Endothelial cell of umbilical vein (primary cell): ENCODE measurements at regions of chr2 and their contacts with region 1.

Region 1: GRCh38 chr2:44087036-44087713 is 81.5 kb upstream of the PPM1B start:
- DNase-seq: peak; percentile 85
- H3K4me3 ChIP-seq: peak overlapping the region in 2 of 3 experiments; percentile 15 to 45
- H3K27ac ChIP-seq: no peak overlapping the region
- H3K4me1 ChIP-seq: peaks cover 4% of the 10 kb centered on the region
- H3K27me3 ChIP-seq: peaks cover 19 to 27% of the 10 kb centered on the region in 2 experiments
- CTCF ChIP-seq: peak; percentile 92 to 95
- POLR2A ChIP-seq: no peak

Region 2: DNA sequence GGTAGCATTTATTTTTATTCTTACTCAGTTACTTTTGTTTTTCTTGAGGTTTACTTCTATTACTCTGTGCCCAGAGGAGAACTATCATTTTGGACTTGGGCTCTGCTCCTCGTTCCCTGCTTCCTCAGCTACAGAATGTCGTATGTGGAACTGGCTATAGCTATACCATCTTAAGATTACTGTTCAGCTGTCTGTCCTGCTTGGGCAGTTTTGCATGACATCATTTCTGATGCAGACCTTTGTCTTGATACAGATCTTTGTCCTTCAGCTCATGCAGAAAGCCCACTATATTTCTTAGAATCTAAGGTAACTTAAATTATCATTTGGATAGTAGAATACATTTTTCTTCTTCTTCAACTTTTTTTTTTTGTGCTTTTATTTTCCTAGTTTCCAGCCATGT is 397.2 kb before region 1 on chr2:
- CTCF ChIA-PET with region 1: no interaction called
- POLR2A ChIA-PET with region 1: no interaction called
- dilution Hi-C with region 1: no loop called
- intact Hi-C with region 1: no loop called
- DNase-seq: no peak
- H3K4me3 ChIP-seq: no peak overlapping the region
- H3K27ac ChIP-seq: no peak overlapping the region
- H3K4me1 ChIP-seq: no peaks in the 10 kb centered on the region
- H3K27me3 ChIP-seq: no peaks in the 10 kb centered on the region
- CTCF ChIP-seq: no peak
- POLR2A ChIP-seq: no peak

Region 3: GRCh38 chr2:43977677-43978375 is 109.3 kb before region 1 on chr2:
- CTCF ChIA-PET with region 1: no interaction called
- POLR2A ChIA-PET with region 1: no interaction called
- dilution Hi-C with region 1: no loop called
- intact Hi-C with region 1: no loop called
- DNase-seq: no peak
- H3K4me3 ChIP-seq: no peak overlapping the region
- H3K27ac ChIP-seq: no peak overlapping the region
- H3K4me1 ChIP-seq: no peaks in the 10 kb centered on the region
- H3K27me3 ChIP-seq: no peaks in the 10 kb centered on the region
- CTCF ChIP-seq: no peak
- POLR2A ChIP-seq: no peak

Region 4: GRCh38 chr2:44063033-44063432 is 24.1 kb before region 1 on chr2:
- CTCF ChIA-PET with region 1: no interaction called
- POLR2A ChIA-PET with region 1: no interaction called
- dilution Hi-C with region 1: no loop called
- intact Hi-C with region 1: no loop called
- DNase-seq: no peak
- H3K4me3 ChIP-seq: no peak overlapping the region
- H3K27ac ChIP-seq: no peak overlapping the region
- H3K4me1 ChIP-seq: no peaks in the 10 kb centered on the region
- H3K27me3 ChIP-seq: peaks cover 0 to under 1% of the 10 kb centered on the region in 2 experiments
- CTCF ChIP-seq: no peak
- POLR2A ChIP-seq: no peak

Region 5: DNA sequence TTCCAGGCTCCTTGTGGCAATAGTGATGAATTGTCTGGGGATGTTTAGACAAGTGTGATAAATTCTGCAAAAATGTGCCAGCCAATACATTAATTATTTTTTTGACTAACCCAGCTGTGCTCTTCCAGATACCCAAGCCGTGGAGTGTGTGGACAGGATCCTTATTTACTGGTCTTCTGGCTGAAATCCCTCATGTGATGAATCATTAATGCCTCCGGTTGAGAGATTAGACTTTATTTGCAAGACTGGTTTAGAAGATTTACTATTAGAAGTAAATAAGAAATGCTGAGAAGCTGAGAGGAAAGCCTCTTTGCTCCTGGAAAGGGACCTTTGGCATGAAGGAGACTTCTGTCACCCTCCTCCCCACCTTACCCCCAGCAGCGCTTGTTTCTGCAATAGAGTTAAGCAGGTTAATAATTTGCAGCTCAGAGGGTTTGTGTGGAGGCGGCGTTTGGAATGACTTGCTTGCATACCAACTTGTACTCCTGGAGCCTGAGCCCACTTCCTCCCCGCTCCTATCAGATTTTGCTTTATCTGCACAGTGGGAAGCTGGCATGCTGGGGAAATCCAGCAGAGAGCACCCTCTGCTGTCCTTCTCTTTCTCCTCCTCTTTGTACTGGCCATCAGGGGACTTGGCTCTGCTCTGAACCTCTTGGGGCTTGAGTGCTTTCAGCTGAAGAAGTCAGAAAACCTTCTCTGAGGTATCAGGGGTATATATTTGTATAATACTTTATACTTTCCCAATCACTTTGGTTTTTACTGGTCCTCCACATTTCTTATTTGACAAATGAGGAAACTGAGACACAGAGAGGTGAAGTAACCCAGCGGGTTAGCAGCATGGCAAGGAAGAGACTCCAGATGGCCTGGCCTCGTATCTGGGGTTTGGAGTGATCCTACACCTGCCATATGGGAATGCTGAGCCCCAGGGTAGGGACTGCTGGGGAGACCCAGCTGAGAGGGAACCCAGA is 204.4 kb after region 1 on chr2:
- CTCF ChIA-PET with region 1: interaction called, 5 read pairs
- POLR2A ChIA-PET with region 1: no interaction called
- dilution Hi-C with region 1: no loop called
- intact Hi-C with region 1: loop called (anchors 1 kb)
- DNase-seq: peak; percentile 67
- H3K4me3 ChIP-seq: no peak overlapping the region
- H3K27ac ChIP-seq: no peak overlapping the region
- H3K4me1 ChIP-seq: peaks cover 6% of the 10 kb centered on the region
- H3K27me3 ChIP-seq: no peaks in the 10 kb centered on the region
- CTCF ChIP-seq: peak; percentile 35 to 48
- POLR2A ChIP-seq: no peak

Region 6: GRCh38 chr2:44342854-44343253 is 255.7 kb after region 1 on chr2:
- CTCF ChIA-PET with region 1: interaction called, 6 read pairs
- POLR2A ChIA-PET with region 1: no interaction called
- dilution Hi-C with region 1: no loop called
- intact Hi-C with region 1: loop called (anchors 1 kb)
- DNase-seq: peak; percentile 20
- H3K4me3 ChIP-seq: no peak overlapping the region
- H3K27ac ChIP-seq: no peak overlapping the region
- H3K4me1 ChIP-seq: no peaks in the 10 kb centered on the region
- H3K27me3 ChIP-seq: no peaks in the 10 kb centered on the region
- CTCF ChIP-seq: no peak
- POLR2A ChIP-seq: no peak